Vagina (tissue), 2 donors: ENCODE measurements at regions of chr19 and their contacts with region 1.

Region 1: DNA sequence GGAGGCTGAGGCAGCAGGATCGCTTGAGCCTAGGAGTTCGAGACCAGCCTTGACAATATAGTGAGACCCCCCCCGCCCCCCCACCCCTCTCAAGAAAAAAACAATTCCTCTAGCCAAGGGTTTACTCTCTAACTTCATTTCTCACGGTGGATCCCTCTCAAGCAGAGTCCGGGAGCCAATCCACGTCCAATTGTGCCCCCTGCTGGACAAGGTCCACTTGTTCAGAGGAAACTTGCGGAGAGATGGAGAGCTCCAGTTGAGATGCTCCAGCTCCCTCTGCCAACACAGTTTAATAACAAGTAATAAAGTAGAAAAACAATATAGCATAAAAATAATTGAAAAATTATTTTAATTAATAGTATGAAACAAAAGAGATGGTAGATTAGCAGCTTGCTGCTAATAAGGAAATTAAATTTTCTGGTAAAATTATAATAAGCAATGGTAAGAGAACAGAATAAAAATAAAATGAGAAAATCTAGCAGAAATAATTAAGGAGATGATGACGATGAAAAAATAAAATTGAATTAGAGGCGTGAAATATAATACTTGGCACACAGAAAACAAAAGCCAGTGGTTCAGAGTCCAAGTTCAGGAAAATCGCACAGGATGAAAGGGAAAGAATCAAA is 14.5 kb upstream of the SIGLEC14 start:
- DNase-seq: no peak
- H3K4me3 ChIP-seq: no peak overlapping the region
- H3K27ac ChIP-seq: no peak overlapping the region
- H3K4me1 ChIP-seq: no peaks in the 10 kb centered on the region
- H3K27me3 ChIP-seq: no peaks in the 10 kb centered on the region
- CTCF ChIP-seq: peak in 2 of 3 experiments; percentile 21 to 38
- POLR2A ChIP-seq: no peak

Region 2: DNA sequence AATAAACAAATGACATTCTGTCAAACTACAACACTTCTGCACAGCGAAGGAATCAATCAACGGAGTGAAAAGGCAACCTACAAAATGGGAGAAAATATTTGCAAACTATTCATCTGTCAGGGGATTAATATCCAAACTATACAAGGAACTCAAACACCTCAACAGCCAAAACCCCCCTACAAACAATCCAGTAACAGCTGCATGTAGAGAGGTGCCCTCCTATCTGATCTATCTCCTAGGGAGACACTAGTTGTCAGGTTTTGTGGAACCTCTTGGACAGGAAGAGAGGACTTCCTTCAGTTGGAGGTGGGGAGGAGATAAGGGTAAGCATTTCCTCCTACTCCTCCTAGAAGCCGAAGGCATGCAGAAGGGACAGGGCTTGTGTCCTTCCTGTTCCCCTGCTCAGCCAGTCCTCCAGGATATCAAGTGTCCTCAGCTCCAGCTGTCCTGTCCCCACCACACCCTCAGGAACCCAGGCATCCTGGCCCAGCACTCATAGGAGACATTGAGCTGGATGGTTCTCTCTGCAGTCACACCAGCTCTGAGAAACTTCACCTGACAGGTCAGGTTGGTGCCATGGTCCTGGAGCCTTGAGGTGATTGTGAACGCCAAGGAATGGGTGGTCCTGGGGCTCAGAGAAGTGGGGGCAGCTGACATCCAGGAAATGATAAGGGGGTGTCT is 193.1 kb before region 1 on chr19:
- intact Hi-C with region 1: loop called (anchors 5 kb)
- DNase-seq: no peak
- H3K4me3 ChIP-seq: no peak overlapping the region
- H3K27ac ChIP-seq: no peak overlapping the region
- H3K4me1 ChIP-seq: no peaks in the 10 kb centered on the region
- H3K27me3 ChIP-seq: no peaks in the 10 kb centered on the region
- CTCF ChIP-seq: no peak
- POLR2A ChIP-seq: no peak

Region 3: GRCh38 chr19:52296773-52297600 is 635.9 kb after region 1 on chr19 and contains the start of gene ZNF480:
- intact Hi-C with region 1: loop called (anchors 5 kb)
- DNase-seq: peak in 1 of 2 donors; percentile 89
- H3K4me3 ChIP-seq: peak within 1 kb of the TSS; percentile 64 to 92
- H3K27ac ChIP-seq: peak within 1 kb of the TSS; percentile 80
- H3K4me1 ChIP-seq: peaks cover 14% of the 10 kb centered on the region
- H3K27me3 ChIP-seq: no peaks in the 10 kb centered on the region
- CTCF ChIP-seq: no peak
- POLR2A ChIP-seq: peak in 1 of 2 donors; percentile 26
- total RNA-seq, gene ZNF480: 9.1 TPM